Dorsolateral prefrontal cortex (tissue), 120 donors: ENCODE measurements at regions of chr7 and their contacts with region 1.

Region 1: GRCh38 chr7:94087664-94088352 is 83.7 kb upstream of the BET1 start:
- DNase-seq: peak in 2 of 10 donors; percentile 5 to 11
- H3K4me3 ChIP-seq: peak overlapping the region in 26 of 59 donors; percentile 2 to 46 (median 34)
- H3K27ac ChIP-seq: no peak overlapping the region
- H3K27me3 ChIP-seq: peaks cover 0 to 16% (median 0%) of the 10 kb centered on the region in 45 donors
- CTCF ChIP-seq: peak; percentile 46 to 86 (median 68)

Region 2: DNA sequence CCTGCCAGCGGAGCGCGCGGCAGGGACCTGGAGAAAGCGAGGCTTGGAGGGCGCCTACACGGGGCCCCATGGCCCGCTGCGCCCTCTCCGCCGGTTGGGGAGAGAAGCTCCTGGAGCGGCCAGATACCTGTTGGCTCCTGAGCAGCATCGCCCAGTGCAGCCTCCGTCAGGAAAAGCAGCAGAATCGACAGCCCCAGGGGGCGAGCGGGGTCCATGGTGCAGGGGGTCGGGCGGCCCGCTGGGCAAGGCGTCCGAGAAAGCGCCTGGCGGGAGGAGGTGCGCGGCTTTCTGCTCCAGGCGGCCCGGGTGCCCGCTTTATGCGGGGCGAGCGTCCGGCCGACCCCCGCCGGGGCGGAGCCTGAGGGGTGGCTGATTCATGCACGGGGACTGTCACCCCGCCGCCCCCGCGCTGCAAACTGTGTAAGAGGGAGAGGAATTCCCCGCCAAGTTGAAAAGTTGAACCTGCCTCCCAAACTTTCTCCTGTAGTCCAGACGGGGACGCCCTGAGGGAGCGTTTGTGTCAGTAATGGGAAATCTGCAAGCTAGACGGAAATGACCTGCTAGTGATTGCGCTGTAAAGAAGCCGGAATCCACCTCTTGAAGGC is 197.2 kb before region 1 on chr7 and contains the start of gene TFPI2:
- intact Hi-C with region 1: loop called in 1 of 2 experiments (anchors 10 kb)
- DNase-seq: no peak
- H3K4me3 ChIP-seq: peak within 1 kb of the TSS; percentile 18 to 73 (median 50)
- H3K27ac ChIP-seq: no peak within 1 kb of the TSS
- H3K27me3 ChIP-seq: peaks cover 0 to 73% (median 43%) of the 10 kb centered on the region in 45 donors
- CTCF ChIP-seq: no peak
- total RNA-seq, gene TFPI2: 0.22 to 2.9 (median 0.68) TPM in 64 of 120 experiments, not detected in the others